Body of pancreas (tissue), 4 donors: ENCODE measurements at regions of chr2 and their contacts with region 1.

Region 1: DNA sequence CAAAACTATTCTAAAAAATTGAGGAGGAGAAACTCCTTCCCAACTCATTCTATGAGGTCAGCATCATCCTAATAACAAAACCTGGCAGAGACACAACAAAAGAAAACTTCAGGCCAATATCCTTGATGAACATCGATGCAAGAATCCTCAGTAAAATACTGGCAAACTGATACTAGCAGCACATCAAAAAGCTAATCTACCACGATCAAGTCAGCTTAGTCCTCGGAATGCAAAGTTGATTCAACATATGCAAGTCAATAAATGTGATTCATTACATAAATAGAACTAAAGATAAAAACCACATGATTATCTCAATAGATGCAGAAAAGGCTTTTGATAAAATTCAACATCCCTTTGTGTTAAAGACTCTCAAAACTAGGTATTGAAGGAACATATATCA is 63.1 kb downstream of the EHBP1 start:
- DNase-seq: no peak
- ATAC-seq: no peak
- H3K4me3 ChIP-seq: no peak overlapping the region
- H3K27ac ChIP-seq: no peak overlapping the region
- H3K4me1 ChIP-seq: no peaks in the 10 kb centered on the region
- H3K27me3 ChIP-seq: no peaks in the 10 kb centered on the region
- CTCF ChIP-seq: no peak
- POLR2A ChIP-seq: no peak

Region 2: GRCh38 chr2:62719757-62720156 is 48.9 kb before region 1 on chr2:
- intact Hi-C with region 1: loop called (anchors 5 kb)
- DNase-seq: no peak
- ATAC-seq: no peak
- H3K4me3 ChIP-seq: no peak overlapping the region
- H3K27ac ChIP-seq: no peak overlapping the region
- H3K4me1 ChIP-seq: peaks cover 6% of the 10 kb centered on the region
- H3K27me3 ChIP-seq: no peaks in the 10 kb centered on the region
- CTCF ChIP-seq: no peak
- POLR2A ChIP-seq: no peak

Region 3: DNA sequence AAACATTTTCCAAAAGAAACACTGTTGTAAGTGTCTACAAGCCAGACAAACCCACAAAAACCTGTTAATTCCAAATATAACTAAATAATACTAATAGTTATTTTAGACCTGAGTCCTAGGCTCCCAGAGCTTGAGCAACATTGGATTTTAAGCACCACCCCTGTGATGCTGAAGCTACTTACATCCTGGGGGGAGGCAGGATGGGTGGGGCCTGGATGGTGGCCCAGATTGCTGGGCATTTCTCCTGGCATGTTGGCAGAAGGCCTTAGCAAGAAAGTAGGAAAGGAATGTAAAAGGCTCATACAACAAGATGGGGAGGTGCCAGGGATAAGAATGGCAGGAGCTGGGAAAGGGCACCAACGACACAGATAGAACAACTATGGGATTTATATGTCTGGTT is 231.3 kb after region 1 on chr2:
- intact Hi-C with region 1: no loop called
- DNase-seq: no peak
- ATAC-seq: no peak
- H3K4me3 ChIP-seq: no peak overlapping the region
- H3K27ac ChIP-seq: no peak overlapping the region
- H3K4me1 ChIP-seq: no peaks in the 10 kb centered on the region
- H3K27me3 ChIP-seq: no peaks in the 10 kb centered on the region
- CTCF ChIP-seq: no peak
- POLR2A ChIP-seq: no peak